ENCODE measurements at regions of chr2 and their contacts with region 1.

Region 1: DNA sequence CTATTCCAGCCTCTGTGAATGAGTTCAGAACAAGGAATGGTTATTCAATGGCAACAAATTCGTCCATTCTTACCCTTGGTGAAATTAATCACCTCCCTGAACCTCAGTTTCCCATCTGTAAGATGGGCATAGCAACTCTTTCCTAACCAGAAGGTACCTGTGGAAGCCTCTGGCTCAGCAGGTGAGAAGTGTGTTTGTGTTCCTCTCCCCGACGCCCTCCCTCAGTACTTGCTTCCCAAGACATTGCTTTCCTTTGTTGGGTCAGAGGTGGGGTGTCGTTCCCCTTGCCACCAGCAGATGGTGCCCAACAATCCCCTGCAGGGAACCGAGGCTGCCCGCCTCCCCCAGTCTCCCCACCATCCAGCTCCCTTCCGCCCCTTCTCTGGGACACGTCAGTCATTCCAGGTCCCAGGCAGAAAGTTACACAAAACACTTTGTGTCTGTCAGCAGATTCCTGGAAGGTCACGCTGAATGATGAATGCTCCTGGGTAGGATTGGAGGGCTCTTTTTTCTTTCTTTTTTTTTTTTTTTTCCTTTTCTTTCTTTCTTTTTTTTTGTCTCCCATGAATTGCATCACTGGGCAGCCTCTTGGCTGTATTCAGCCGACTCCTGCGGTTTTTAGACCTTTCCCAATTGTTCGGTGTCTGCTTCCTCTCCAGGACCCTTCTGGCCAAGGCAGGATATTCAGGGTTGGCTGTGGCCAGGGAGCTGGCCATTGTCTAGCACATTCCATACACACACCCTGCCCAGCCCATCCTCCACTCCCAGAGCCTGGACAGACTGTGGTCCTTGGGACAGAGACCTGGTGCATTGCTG is 117.3 kb downstream of the LPIN1 start:
- DNase-seq: no peak
- ATAC-seq: peak; percentile 45
- H3K4me3 ChIP-seq: peak overlapping the region; percentile 35; the same call in 1 of the 2 replicates
- H3K27ac ChIP-seq: peak overlapping the region; percentile 85
- H3K4me1 ChIP-seq: peaks cover 65% of the 10 kb centered on the region
- H3K27me3 ChIP-seq: no peaks in the 10 kb centered on the region
- CTCF ChIP-seq: peak; percentile 93 to 97 (median 94)
- EP300 ChIP-seq: no peak
- POLR2A ChIP-seq: no peak
- RAD21 ChIP-seq: peak; percentile 81

Region 2: GRCh38 chr2:11775384-11775783 is 88.3 kb before region 1 on chr2:
- CTCF ChIA-PET with region 1: no interaction called
- POLR2A ChIA-PET with region 1: no interaction called
- RAD21 ChIA-PET with region 1: no interaction called
- SMC1A ChIA-PET with region 1: no interaction called
- in situ Hi-C with region 1: no loop called
- intact Hi-C with region 1: no loop called
- DNase-seq: peak; percentile 44
- ATAC-seq: peak; percentile 79
- H3K4me3 ChIP-seq: 0 out of 2 replicates have a peak overlapping the region, but pooled peaks have one; percentile 12
- H3K27ac ChIP-seq: no peak overlapping the region
- H3K4me1 ChIP-seq: peaks cover 7% of the 10 kb centered on the region
- H3K27me3 ChIP-seq: no peaks in the 10 kb centered on the region
- CTCF ChIP-seq: no peak
- EP300 ChIP-seq: no peak
- POLR2A ChIP-seq: no peak
- RAD21 ChIP-seq: no peak

Region 3: DNA sequence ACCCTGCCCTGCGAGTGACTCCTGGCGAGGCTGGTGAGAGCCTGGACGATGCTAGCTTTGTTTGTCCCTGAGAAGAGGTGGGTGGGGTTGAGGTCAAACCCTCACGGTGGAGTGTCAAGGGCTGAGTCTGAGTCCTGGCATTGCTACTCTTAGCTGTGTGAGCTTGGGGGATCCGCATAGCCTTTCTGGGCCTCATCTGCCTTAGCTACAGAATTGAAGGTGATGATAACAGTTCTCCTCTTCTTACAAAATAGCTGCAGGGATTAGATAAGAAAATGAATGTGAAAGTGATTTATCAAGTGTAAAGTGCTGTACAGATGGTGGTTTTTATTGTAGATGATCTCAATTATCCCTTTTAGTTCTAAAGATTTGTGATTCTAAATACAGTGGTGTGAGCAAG is 27.3 kb after region 1 on chr2:
- CTCF ChIA-PET with region 1: interaction called, 3 read pairs
- POLR2A ChIA-PET with region 1: interaction called, 4 read pairs
- RAD21 ChIA-PET with region 1: no interaction called
- SMC1A ChIA-PET with region 1: interaction called, 17 read pairs
- in situ Hi-C with region 1: no loop called
- intact Hi-C with region 1: no loop called
- DNase-seq: no peak
- ATAC-seq: no peak; the same call in 2 of the 3 replicates
- H3K4me3 ChIP-seq: no peak overlapping the region
- H3K27ac ChIP-seq: no peak overlapping the region
- H3K4me1 ChIP-seq: no peaks in the 10 kb centered on the region
- H3K27me3 ChIP-seq: no peaks in the 10 kb centered on the region
- CTCF ChIP-seq: no peak
- EP300 ChIP-seq: no peak
- POLR2A ChIP-seq: no peak
- RAD21 ChIP-seq: no peak

Region 4: DNA sequence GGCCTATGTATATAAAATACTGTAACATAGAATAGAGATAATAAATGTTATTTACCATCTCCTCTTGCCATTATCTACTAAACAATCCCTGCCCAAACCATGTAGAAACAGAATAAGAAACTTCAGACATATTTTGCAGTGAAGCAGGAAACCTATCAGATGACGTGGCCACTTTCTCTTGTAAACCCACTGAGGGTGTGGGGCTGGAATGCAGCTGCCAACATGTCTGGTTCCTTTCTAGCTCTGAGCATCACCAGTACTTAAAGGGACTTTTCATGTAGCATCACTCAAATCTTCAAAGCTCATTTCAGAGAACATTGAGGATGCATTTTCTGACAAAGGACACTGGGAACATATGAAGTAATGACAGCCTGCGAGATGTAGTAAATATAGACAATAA is 134.5 kb after region 1 on chr2:
- CTCF ChIA-PET with region 1: interaction called, 5 read pairs
- POLR2A ChIA-PET with region 1: interaction called, 5 read pairs
- RAD21 ChIA-PET with region 1: interaction called, 9 read pairs
- SMC1A ChIA-PET with region 1: interaction called, 15 read pairs
- in situ Hi-C with region 1: no loop called
- intact Hi-C with region 1: no loop called
- DNase-seq: peak; percentile 60
- ATAC-seq: peak; percentile 95
- H3K4me3 ChIP-seq: no peak overlapping the region
- H3K27ac ChIP-seq: peak overlapping the region; percentile 50
- H3K4me1 ChIP-seq: peaks cover 17% of the 10 kb centered on the region
- H3K27me3 ChIP-seq: no peaks in the 10 kb centered on the region
- CTCF ChIP-seq: no peak
- EP300 ChIP-seq: no peak
- POLR2A ChIP-seq: no peak
- RAD21 ChIP-seq: no peak

Region 5: DNA sequence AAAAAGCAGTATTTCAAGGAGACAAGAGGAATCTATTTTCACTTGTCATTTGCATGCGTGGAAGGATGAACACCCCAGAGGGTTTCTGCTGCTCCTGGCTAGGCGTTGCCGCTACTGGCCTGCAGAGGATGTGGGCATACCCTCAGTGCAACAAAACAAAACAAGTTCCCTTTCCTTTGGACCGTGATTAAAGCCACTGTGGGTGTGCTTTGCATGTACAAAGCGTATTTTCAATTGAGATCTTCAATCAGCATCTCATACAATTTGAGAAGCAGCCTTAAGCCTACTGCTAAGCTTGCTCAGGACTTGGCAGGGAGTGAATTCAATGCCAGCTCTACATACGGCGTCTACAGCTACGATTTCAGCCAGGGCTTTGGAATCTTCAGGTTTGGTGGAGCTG is 181.1 kb after region 1 on chr2:
- CTCF ChIA-PET with region 1: interaction called, 35 read pairs
- POLR2A ChIA-PET with region 1: interaction called, 6 read pairs
- RAD21 ChIA-PET with region 1: interaction called, 22 read pairs
- SMC1A ChIA-PET with region 1: interaction called, 54 read pairs
- in situ Hi-C with region 1: no loop called
- intact Hi-C with region 1: loop called (anchors 2 kb)
- DNase-seq: peak; percentile 83
- ATAC-seq: peak; percentile 83
- H3K4me3 ChIP-seq: peak overlapping the region; percentile 34; the same call in 1 of the 2 replicates
- H3K27ac ChIP-seq: peak overlapping the region; percentile 75
- H3K4me1 ChIP-seq: peaks cover 44% of the 10 kb centered on the region
- H3K27me3 ChIP-seq: no peaks in the 10 kb centered on the region
- CTCF ChIP-seq: peak in 1 of 3 experiments; percentile 24; a peak in 1 of 6 replicates
- EP300 ChIP-seq: 0 out of 4 replicates have a peak, but pooled peaks of 1 of the 2 experiments have one; percentile 15
- POLR2A ChIP-seq: no peak
- RAD21 ChIP-seq: no peak

Region 6: DNA sequence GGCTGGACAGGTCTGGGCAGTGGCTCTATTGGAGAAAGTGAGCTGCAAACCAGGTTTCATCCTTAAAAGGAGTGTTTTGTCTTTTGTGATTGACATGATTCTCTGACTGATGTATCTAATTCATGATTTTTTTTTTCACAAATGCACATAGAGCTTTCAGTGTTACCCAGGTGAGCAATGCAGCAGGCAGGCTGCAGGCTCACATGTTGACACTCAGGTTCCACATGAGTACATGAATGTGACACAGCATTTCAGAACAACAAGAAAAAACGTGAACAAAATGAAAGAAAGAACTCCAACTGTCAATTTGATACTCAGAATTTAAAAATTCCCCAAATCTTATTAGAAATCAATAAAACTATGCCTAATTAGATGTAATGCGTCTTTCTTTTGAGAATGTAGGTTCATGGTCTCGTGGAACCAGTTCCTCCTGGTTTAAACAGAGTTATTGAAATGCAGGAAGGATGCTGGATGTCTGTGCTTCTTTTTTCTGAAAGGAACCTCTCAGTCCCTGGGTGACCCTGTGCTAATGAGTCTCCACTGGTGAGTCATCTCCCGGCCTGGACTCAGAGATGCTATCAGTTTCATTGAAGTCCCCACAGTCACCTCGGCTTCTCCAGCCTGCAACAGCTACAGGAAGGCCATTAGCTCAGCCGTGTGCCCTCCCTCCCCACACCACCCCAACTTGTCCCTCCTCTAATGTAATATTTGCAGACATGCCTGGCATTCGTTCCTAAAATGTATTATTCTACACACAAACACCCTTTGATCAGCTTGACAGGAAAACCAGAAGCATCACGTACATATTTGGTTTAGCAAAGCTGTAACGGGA is 313.1 kb after region 1 on chr2:
- CTCF ChIA-PET with region 1: no interaction called
- POLR2A ChIA-PET with region 1: no interaction called
- RAD21 ChIA-PET with region 1: interaction called, 4 read pairs
- SMC1A ChIA-PET with region 1: interaction called, 3 read pairs
- in situ Hi-C with region 1: no loop called
- intact Hi-C with region 1: loop called (anchors 10 kb)
- DNase-seq: peak; percentile 45
- ATAC-seq: peak; percentile 97
- H3K4me3 ChIP-seq: no peak overlapping the region
- H3K27ac ChIP-seq: no peak overlapping the region
- H3K4me1 ChIP-seq: peaks cover 10% of the 10 kb centered on the region
- H3K27me3 ChIP-seq: no peaks in the 10 kb centered on the region
- CTCF ChIP-seq: no peak
- EP300 ChIP-seq: no peak
- POLR2A ChIP-seq: no peak
- RAD21 ChIP-seq: no peak

Region 7: DNA sequence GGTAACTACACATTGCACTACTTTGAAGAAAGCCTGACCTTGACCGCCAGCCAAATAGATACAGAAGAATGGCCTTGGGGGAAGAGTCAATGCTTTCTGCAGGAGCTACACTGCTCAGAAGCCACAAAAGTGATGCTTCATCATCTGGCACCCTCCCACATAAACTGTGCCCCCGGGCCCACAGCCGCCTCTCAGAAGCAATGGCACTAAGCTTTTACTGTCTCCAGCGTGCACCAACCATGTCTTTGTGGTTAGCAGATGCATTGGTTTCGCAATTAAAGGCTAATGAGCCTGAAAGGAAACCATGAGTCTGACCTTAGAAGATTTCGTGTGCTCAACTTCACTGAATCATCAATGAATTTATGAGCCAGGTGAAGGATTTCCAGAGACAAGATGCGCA is 643.6 kb after region 1 on chr2:
- CTCF ChIA-PET with region 1: interaction called, 3 read pairs
- POLR2A ChIA-PET with region 1: interaction called, 3 read pairs
- RAD21 ChIA-PET with region 1: no interaction called
- SMC1A ChIA-PET with region 1: no interaction called
- in situ Hi-C with region 1: no loop called
- intact Hi-C with region 1: loop called (anchors 10 kb)
- DNase-seq: peak; percentile 76
- ATAC-seq: peak; percentile 97
- H3K4me3 ChIP-seq: no peak overlapping the region
- H3K27ac ChIP-seq: no peak overlapping the region
- H3K4me1 ChIP-seq: peaks cover 33% of the 10 kb centered on the region
- H3K27me3 ChIP-seq: no peaks in the 10 kb centered on the region
- CTCF ChIP-seq: no peak
- EP300 ChIP-seq: peak; percentile 39 to 54; a peak in 2 of 4 replicates
- POLR2A ChIP-seq: no peak
- RAD21 ChIP-seq: no peak

Measured in GM12878 (cell line).